ENCODE measurements at regions of chr4 and their contacts with region 1.

Region 1: GRCh38 chr4:188262464-188262863 is 123.2 kb downstream of the TRIML1 start:
- DNase-seq: peak; percentile 11
- H3K4me3 ChIP-seq: no peak overlapping the region
- H3K27ac ChIP-seq: no peak overlapping the region
- H3K4me1 ChIP-seq: no peaks in the 10 kb centered on the region
- H3K27me3 ChIP-seq: no peaks in the 10 kb centered on the region
- CTCF ChIP-seq: no peak

Region 2: DNA sequence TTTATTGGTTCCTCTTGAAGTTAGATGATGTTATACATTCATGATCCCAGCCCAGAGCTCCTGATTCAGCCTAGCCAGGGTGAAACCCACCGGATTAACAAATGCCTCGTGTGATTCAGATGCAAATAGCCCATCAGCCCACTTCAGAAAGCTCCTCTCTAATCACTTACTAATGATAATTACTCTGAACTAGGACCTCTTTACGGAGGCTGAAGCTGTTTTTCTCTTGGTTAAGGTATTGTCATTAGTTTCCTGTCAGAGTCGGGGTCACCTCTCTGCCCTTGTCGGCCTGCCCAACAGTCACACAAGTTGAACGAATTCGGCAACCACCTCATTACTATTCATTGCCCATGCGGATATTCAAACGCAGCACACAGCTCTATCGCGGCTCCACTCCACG is 230.3 kb before region 1 on chr4:
- CTCF ChIA-PET with region 1: no interaction called
- dilution Hi-C with region 1: no loop called
- in situ Hi-C with region 1: no loop called
- intact Hi-C with region 1: no loop called
- DNase-seq: no peak
- H3K4me3 ChIP-seq: no peak overlapping the region
- H3K27ac ChIP-seq: no peak overlapping the region
- H3K4me1 ChIP-seq: no peaks in the 10 kb centered on the region
- H3K27me3 ChIP-seq: no peaks in the 10 kb centered on the region
- CTCF ChIP-seq: no peak

Region 3: GRCh38 chr4:188246488-188246887 is 16.0 kb before region 1 on chr4:
- CTCF ChIA-PET with region 1: interaction called, 15 read pairs
- dilution Hi-C with region 1: no loop called
- in situ Hi-C with region 1: no loop called
- intact Hi-C with region 1: no loop called
- DNase-seq: no peak
- H3K4me3 ChIP-seq: no peak overlapping the region
- H3K27ac ChIP-seq: no peak overlapping the region
- H3K4me1 ChIP-seq: no peaks in the 10 kb centered on the region
- H3K27me3 ChIP-seq: no peaks in the 10 kb centered on the region
- CTCF ChIP-seq: no peak

Measured in mammary epithelial cell (primary cell).